ENCODE measurements at regions of chr5 and their contacts with region 1.

Region 1: DNA sequence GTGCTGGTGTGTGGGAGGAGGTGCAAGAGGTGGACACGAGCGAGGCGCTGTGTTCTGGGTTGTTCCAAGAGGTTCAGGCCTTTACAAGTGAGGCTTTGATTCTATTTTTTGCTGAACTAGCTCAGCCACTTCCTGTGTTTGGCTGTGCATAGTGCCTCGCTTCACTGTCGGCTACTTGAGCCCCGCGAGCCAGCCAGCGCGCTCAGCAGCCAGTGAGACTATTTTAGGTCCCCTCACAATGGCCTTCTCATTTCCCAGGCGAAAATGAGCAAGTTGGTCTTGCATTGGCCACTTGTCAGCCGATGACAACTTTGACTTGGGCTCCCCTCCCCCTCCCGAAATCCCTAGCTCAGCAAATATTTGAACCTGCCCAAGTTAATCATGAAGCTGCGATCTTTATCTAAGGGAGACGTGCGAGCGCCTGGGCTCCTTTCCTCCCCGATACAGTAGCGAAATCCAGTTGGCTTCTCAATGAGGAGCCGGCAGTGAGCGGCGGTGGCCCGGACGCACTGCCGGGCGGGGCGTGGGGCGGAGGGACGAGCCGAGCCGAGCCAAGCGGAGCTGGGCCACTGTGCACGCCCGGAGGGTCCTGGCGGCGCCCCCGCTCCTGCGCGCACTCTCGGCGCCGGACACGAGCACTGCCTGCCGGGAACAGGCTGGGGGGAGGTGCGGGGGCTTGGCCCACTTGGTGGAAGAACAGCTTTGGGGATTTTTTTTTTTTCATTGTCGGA is 72.6 kb downstream of the PIK3R1 start:
- DNase-seq: peak; percentile 59
- ATAC-seq: peak; percentile 63
- H3K4me3 ChIP-seq: peak overlapping the region; percentile 47 to 75 (median 65)
- H3K4me3 Mint-ChIP-seq: peak overlapping the region; percentile 97
- H3K27ac ChIP-seq: peak overlapping the region; percentile 26 to 64
- H3K27ac Mint-ChIP-seq: peak overlapping the region; percentile 91
- H3K4me1 ChIP-seq: peaks cover 31 to 34% of the 10 kb centered on the region in 2 donors
- H3K4me1 Mint-ChIP-seq: peaks cover 40% of the 10 kb centered on the region
- H3K27me3 ChIP-seq: no peaks in the 10 kb centered on the region
- H3K27me3 Mint-ChIP-seq: no peaks in the 10 kb centered on the region
- CTCF ChIP-seq: no peak

Region 2: GRCh38 chr5:68261569-68262065 is 26.5 kb before region 1 on chr5:
- CTCF ChIA-PET with region 1: interaction called, 14 read pairs
- POLR2A ChIA-PET with region 1: no interaction called
- intact Hi-C with region 1: no loop called
- DNase-seq: no peak
- ATAC-seq: no peak
- H3K4me3 ChIP-seq: no peak overlapping the region
- H3K4me3 Mint-ChIP-seq: no peak overlapping the region
- H3K27ac ChIP-seq: peak overlapping the region in 1 of 2 donors; percentile 28
- H3K27ac Mint-ChIP-seq: peak overlapping the region; percentile 27
- H3K4me1 ChIP-seq: peaks cover 11 to 16% of the 10 kb centered on the region in 2 donors
- H3K4me1 Mint-ChIP-seq: peaks cover 73% of the 10 kb centered on the region
- H3K27me3 ChIP-seq: no peaks in the 10 kb centered on the region
- H3K27me3 Mint-ChIP-seq: no peaks in the 10 kb centered on the region
- CTCF ChIP-seq: no peak

Region 3: DNA sequence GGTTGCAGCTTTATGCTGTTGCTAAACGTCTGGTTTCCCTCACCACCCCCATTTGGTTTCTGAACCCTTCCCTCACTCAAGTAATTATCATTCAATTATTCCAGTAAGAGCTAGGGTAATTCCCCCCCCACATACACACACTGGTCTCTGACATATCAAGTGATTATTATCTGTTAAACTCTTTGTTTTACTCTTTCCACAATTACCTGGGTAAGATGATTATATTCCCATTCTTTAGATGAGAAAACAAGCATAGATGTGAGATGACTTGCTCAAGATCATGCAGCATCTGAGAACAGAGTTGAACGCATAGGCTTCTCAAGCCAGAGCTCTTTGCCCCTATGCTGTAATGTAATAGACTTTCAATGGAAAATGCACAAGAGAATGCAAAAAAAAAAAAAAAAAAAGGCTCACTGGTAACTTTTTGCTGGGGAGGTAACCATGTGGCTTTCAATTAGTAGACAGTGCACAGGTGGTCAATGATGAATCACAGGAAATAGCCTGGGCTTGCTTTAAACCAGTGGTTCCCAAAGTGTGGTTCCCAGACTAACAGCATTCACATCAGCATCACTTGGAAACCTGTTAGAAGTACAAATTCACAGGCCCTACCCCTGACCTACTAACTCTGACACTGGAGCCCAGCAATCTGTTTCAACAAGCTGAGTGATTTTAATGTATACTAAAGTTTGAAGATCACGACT is 15.0 kb after region 1 on chr5:
- CTCF ChIA-PET with region 1: interaction called, 43 read pairs
- POLR2A ChIA-PET with region 1: no interaction called
- intact Hi-C with region 1: no loop called
- DNase-seq: no peak
- ATAC-seq: no peak
- H3K4me3 ChIP-seq: no peak overlapping the region
- H3K4me3 Mint-ChIP-seq: no peak overlapping the region
- H3K27ac ChIP-seq: no peak overlapping the region
- H3K27ac Mint-ChIP-seq: no peak overlapping the region
- H3K4me1 ChIP-seq: no peaks in the 10 kb centered on the region
- H3K4me1 Mint-ChIP-seq: no peaks in the 10 kb centered on the region
- H3K27me3 ChIP-seq: no peaks in the 10 kb centered on the region
- H3K27me3 Mint-ChIP-seq: no peaks in the 10 kb centered on the region
- CTCF ChIP-seq: no peak

Region 4: GRCh38 chr5:68336200-68336599 is 48.1 kb after region 1 on chr5:
- CTCF ChIA-PET with region 1: no interaction called
- POLR2A ChIA-PET with region 1: no interaction called
- intact Hi-C with region 1: no loop called
- DNase-seq: no peak
- ATAC-seq: no peak
- H3K4me3 ChIP-seq: no peak overlapping the region
- H3K4me3 Mint-ChIP-seq: no peak overlapping the region
- H3K27ac ChIP-seq: no peak overlapping the region
- H3K27ac Mint-ChIP-seq: no peak overlapping the region
- H3K4me1 ChIP-seq: peaks cover 13 to 16% of the 10 kb centered on the region in 2 donors
- H3K4me1 Mint-ChIP-seq: peaks cover 14% of the 10 kb centered on the region
- H3K27me3 ChIP-seq: no peaks in the 10 kb centered on the region
- H3K27me3 Mint-ChIP-seq: no peaks in the 10 kb centered on the region
- CTCF ChIP-seq: no peak

Region 5: DNA sequence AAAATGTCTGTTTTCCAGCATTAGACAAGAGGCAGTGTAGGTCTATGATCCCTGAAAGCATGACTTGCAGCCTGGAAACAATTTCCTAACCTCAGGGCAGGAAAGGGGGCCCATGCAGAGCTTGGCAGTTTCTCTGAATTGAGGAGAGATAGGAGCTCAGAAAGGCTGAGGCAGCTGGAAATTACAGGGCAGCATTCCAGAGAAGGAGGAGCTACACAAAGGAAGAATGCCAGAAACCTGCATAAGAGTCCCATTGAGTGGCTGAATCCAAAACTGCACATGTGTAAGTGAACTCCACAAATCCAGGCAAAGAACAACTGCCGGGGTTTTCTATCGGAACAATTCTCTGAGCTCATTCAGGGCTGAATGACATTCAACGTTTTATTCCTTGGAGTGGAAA is 274.2 kb after region 1 on chr5:
- CTCF ChIA-PET with region 1: no interaction called
- POLR2A ChIA-PET with region 1: no interaction called
- intact Hi-C with region 1: loop called (anchors 10 kb)
- DNase-seq: no peak
- ATAC-seq: no peak
- H3K4me3 ChIP-seq: no peak overlapping the region
- H3K4me3 Mint-ChIP-seq: no peak overlapping the region
- H3K27ac ChIP-seq: no peak overlapping the region
- H3K27ac Mint-ChIP-seq: no peak overlapping the region
- H3K4me1 ChIP-seq: peaks cover 18 to 19% of the 10 kb centered on the region in 2 donors
- H3K4me1 Mint-ChIP-seq: peaks cover 29% of the 10 kb centered on the region
- H3K27me3 ChIP-seq: no peaks in the 10 kb centered on the region
- H3K27me3 Mint-ChIP-seq: no peaks in the 10 kb centered on the region
- CTCF ChIP-seq: no peak

Region 6: GRCh38 chr5:68872088-68872839 is 584.1 kb after region 1 on chr5:
- CTCF ChIA-PET with region 1: no interaction called
- POLR2A ChIA-PET with region 1: no interaction called
- intact Hi-C with region 1: no loop called
- DNase-seq: no peak
- ATAC-seq: no peak
- H3K4me3 ChIP-seq: no peak overlapping the region
- H3K4me3 Mint-ChIP-seq: no peak overlapping the region
- H3K27ac ChIP-seq: no peak overlapping the region
- H3K27ac Mint-ChIP-seq: no peak overlapping the region
- H3K4me1 ChIP-seq: no peaks in the 10 kb centered on the region
- H3K4me1 Mint-ChIP-seq: no peaks in the 10 kb centered on the region
- H3K27me3 ChIP-seq: no peaks in the 10 kb centered on the region
- H3K27me3 Mint-ChIP-seq: peaks cover 4% of the 10 kb centered on the region
- CTCF ChIP-seq: no peak

Region 7: GRCh38 chr5:68962757-68963484 is 674.8 kb after region 1 on chr5:
- CTCF ChIA-PET with region 1: interaction called, 3 read pairs
- POLR2A ChIA-PET with region 1: no interaction called
- intact Hi-C with region 1: loop called (anchors 1 kb)
- DNase-seq: peak; percentile 15
- ATAC-seq: no peak
- H3K4me3 ChIP-seq: no peak overlapping the region
- H3K4me3 Mint-ChIP-seq: no peak overlapping the region
- H3K27ac ChIP-seq: no peak overlapping the region
- H3K27ac Mint-ChIP-seq: no peak overlapping the region
- H3K4me1 ChIP-seq: no peaks in the 10 kb centered on the region
- H3K4me1 Mint-ChIP-seq: peaks cover 7% of the 10 kb centered on the region
- H3K27me3 ChIP-seq: no peaks in the 10 kb centered on the region
- H3K27me3 Mint-ChIP-seq: no peaks in the 10 kb centered on the region
- CTCF ChIP-seq: no peak

Measured in B cell (primary cell).